Activated B cell treated with CpG ODN at 0.5 μM for 24 hours (primary cell): ENCODE measurements at regions of chr4 and their contacts with region 1.

Region 1: DNA sequence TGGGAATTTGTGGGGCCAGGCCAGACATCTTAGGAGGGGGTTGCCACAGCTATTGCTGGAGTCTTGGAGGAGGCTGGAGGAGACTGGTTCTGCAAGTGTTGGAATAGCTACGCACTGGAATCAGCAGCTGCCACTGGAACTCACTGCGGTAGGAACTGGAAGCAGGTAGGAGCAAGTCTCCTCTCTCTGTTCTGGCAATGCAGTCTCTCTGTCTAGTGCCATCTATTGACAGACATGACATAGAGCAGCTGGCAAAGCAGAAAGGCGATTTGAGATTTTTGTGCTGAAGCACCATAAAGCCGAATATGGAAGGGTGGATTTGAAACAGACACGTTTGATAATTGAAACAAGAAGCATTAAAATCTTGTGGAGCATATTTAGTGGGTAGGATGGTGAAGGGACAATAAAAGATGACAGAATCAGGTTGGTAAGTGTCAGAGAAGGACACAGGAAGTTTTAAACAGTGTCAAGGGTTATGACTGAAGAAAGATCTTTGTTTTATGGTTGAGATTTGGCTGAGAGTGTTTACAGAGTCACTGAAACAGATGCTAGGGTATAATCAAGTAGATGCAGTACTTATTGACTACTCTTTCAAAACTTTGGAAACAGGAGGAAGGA is 23.5 kb upstream of the SYNPO2 start:
- DNase-seq: no peak
- ATAC-seq: no peak
- H3K4me3 Mint-ChIP-seq: no peak overlapping the region
- H3K27ac Mint-ChIP-seq: no peak overlapping the region
- H3K4me1 Mint-ChIP-seq: no peaks in the 10 kb centered on the region
- H3K27me3 Mint-ChIP-seq: no peaks in the 10 kb centered on the region
- CTCF ChIP-seq: no peak

Region 2: DNA sequence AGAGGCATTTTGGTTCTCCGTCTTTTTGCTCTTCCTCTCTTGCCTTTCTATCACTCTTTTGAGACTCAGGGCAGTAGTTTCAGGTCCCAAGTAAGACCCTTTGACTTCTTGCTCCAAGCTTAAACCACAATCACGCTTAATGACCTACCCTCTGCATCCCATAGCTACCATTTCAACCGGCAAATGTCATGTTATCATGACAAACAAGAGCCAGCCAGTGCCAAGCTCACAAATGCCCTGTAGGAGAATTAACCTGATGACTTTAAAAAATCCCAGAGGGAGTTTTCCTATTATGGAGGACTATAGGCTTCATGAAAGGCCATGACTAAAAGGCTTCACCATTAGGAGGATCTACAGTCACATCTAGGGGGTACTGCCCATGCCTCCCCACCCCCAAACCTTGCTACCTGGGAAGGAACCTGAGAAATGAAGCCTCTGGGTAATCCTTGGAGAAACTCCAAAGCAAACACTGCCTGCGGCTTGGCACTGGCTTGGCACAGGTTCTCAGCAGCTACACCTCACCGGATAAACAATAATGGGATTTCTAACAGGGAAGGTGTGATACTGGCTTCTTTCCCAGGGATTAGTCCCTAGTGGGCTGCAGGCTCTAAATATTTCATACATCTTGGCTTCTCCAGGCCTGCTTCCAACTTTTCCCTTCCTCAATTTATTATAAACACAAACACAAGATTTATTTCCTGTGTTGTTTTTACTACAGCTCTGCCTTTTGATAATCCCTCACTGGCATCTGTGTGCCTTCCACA is 41.9 kb before region 1 on chr4:
- CTCF ChIA-PET with region 1: no interaction called
- POLR2A ChIA-PET with region 1: no interaction called
- intact Hi-C with region 1: loop called (anchors 5 kb)
- DNase-seq: no peak
- ATAC-seq: no peak
- H3K4me3 Mint-ChIP-seq: no peak overlapping the region
- H3K27ac Mint-ChIP-seq: no peak overlapping the region
- H3K4me1 Mint-ChIP-seq: no peaks in the 10 kb centered on the region
- H3K27me3 Mint-ChIP-seq: no peaks in the 10 kb centered on the region
- CTCF ChIP-seq: no peak